B cell (primary cell): ENCODE measurements at regions of chr6 and their contacts with region 1.

Region 1: GRCh38 chr6:73471686-73472290 is 10.3 kb downstream of the MTO1 start:
- DNase-seq: peak; percentile 77
- ATAC-seq: peak; percentile 90
- H3K4me3 ChIP-seq: peak overlapping the region in 1 of 5 experiments; percentile 56
- H3K4me3 Mint-ChIP-seq: peak overlapping the region; percentile 60
- H3K27ac ChIP-seq: peak overlapping the region; percentile 71 to 82
- H3K27ac Mint-ChIP-seq: peak overlapping the region; percentile 62
- H3K4me1 ChIP-seq: peaks cover 14 to 19% of the 10 kb centered on the region in 2 donors
- H3K4me1 Mint-ChIP-seq: peaks cover 24% of the 10 kb centered on the region
- H3K27me3 ChIP-seq: no peaks in the 10 kb centered on the region
- H3K27me3 Mint-ChIP-seq: no peaks in the 10 kb centered on the region
- CTCF ChIP-seq: no peak

Region 2: GRCh38 chr6:73451223-73452107 is 20.3 kb before region 1 on chr6:
- CTCF ChIA-PET with region 1: no interaction called
- POLR2A ChIA-PET with region 1: interaction called, 16 read pairs
- intact Hi-C with region 1: loop called (anchors 1 kb)
- DNase-seq: peak; percentile 82
- ATAC-seq: peak; percentile 56
- H3K4me3 ChIP-seq: peak overlapping the region; percentile 86 to 94 (median 91)
- H3K4me3 Mint-ChIP-seq: peak overlapping the region; percentile 95
- H3K27ac ChIP-seq: peak overlapping the region; percentile 87 to 89
- H3K27ac Mint-ChIP-seq: peak overlapping the region; percentile 91
- H3K4me1 ChIP-seq: peaks cover 16 to 25% of the 10 kb centered on the region in 2 donors
- H3K4me1 Mint-ChIP-seq: peaks cover 23% of the 10 kb centered on the region
- H3K27me3 ChIP-seq: no peaks in the 10 kb centered on the region
- H3K27me3 Mint-ChIP-seq: no peaks in the 10 kb centered on the region
- CTCF ChIP-seq: no peak

Region 3: DNA sequence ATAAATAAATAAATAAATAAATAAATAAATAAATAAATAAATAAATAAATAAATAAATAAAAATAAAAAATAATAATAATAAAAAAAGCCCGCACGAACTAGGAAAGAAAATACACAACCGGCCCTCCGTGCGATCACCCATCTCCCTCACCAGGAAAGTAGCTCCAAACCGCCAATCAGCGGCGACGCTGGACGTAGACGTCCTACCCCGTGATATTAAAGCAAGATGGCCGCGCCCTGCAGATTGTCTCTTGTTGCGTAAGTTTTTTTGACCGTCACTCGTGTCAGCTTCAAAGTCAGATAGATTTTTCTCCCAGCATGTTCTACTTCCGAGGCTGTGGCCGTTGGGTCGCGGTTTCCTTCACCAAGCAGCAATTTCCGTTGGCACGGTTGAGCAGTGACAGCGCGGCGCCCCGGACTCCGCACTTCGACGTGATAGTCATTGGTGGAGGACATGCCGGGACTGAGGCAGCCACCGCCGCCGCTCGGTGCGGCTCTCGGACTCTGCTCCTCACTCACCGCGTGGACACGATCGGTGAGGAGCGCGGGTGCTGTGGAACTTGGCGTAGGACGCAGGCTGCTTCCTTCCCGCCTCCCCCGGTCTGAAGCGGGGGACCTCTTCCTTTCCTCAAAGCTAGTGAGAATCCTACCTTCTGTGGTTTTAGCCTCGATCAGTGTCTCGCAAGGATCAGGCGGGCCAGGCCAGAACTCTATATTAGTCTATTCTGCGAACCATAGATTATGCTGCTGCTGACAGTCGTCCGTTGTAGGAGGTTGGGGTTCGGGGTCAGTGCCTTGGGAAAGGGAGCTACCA is 10.0 kb before region 1 on chr6 and contains the start of gene MTO1:
- CTCF ChIA-PET with region 1: interaction called, 18 read pairs
- POLR2A ChIA-PET with region 1: interaction called, 14 read pairs
- intact Hi-C with region 1: loop called (anchors 1 kb)
- DNase-seq: peak; percentile 91
- ATAC-seq: peak; percentile 94
- H3K4me3 ChIP-seq: peak within 1 kb of the TSS; percentile 66 to 99 (median 78)
- H3K4me3 Mint-ChIP-seq: peak within 1 kb of the TSS; percentile 100
- H3K27ac ChIP-seq: peak within 1 kb of the TSS; percentile 90 to 96
- H3K27ac Mint-ChIP-seq: peak within 1 kb of the TSS; percentile 97
- H3K4me1 ChIP-seq: peaks cover 12 to 31% of the 10 kb centered on the region in 2 donors
- H3K4me1 Mint-ChIP-seq: peaks cover 29% of the 10 kb centered on the region
- H3K27me3 ChIP-seq: no peaks in the 10 kb centered on the region
- H3K27me3 Mint-ChIP-seq: no peaks in the 10 kb centered on the region
- CTCF ChIP-seq: no peak
- total RNA-seq, gene MTO1: 79.5 and 84.4 TPM in 2 replicates

Region 4: GRCh38 chr6:73560182-73560732 is 88.5 kb after region 1 on chr6:
- CTCF ChIA-PET with region 1: no interaction called
- POLR2A ChIA-PET with region 1: no interaction called
- intact Hi-C with region 1: no loop called
- DNase-seq: no peak
- ATAC-seq: no peak
- H3K4me3 ChIP-seq: no peak overlapping the region
- H3K4me3 Mint-ChIP-seq: peak overlapping the region; percentile 23
- H3K27ac ChIP-seq: no peak overlapping the region
- H3K27ac Mint-ChIP-seq: no peak overlapping the region
- H3K4me1 ChIP-seq: peaks cover 0 to 3% of the 10 kb centered on the region in 2 donors
- H3K4me1 Mint-ChIP-seq: peaks cover 12% of the 10 kb centered on the region
- H3K27me3 ChIP-seq: no peaks in the 10 kb centered on the region
- H3K27me3 Mint-ChIP-seq: no peaks in the 10 kb centered on the region
- CTCF ChIP-seq: no peak

Region 5: DNA sequence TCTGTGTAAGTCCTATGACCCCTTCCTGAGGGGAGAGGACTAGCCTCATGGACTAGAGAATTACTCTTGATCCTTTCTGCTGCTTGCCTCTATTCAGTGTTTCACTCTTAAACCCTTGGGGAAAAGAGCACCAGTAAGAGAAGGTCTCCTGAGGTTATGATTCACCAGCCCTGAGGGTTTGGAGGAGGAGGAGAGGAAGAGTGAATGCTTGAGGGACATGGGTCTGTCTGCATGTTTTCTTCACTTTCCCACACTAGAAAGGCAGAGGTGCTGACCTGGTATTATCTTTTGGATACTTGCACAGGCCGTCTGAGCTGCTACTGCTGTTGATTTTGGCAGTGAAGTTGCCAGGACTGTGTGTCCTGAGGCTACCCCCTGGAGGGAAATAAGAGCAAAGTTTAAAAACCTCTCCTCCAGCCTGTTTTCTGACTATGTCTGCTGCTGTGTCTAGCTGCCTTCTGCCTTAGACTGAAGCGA is 302.6 kb after region 1 on chr6:
- CTCF ChIA-PET with region 1: no interaction called
- POLR2A ChIA-PET with region 1: no interaction called
- intact Hi-C with region 1: no loop called
- DNase-seq: no peak
- ATAC-seq: no peak
- H3K4me3 ChIP-seq: no peak overlapping the region
- H3K4me3 Mint-ChIP-seq: no peak overlapping the region
- H3K27ac ChIP-seq: no peak overlapping the region
- H3K27ac Mint-ChIP-seq: no peak overlapping the region
- H3K4me1 ChIP-seq: no peaks in the 10 kb centered on the region
- H3K4me1 Mint-ChIP-seq: no peaks in the 10 kb centered on the region
- H3K27me3 ChIP-seq: no peaks in the 10 kb centered on the region
- H3K27me3 Mint-ChIP-seq: no peaks in the 10 kb centered on the region
- CTCF ChIP-seq: no peak